ENCODE measurements at regions of chr1 and their contacts with region 1.

Region 1: DNA sequence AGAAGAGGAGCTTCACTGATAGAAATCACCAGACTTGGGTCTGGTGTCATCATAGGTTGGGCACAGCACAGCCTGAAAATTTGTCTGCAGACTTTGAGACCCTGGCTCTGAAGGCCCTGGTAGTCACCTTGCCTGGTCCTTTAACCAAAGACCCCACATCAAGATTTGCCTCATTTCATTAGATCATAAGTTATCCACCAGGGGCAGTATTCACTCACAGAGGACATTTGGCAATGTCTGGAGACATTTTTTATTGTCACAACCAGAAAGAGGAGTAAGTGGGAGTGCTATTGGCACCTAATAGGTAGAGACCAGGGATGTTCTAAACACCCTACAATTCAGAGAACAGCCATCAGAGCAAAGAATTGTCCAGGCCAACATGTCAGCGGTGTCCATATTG is 22.1 kb upstream of the PAX7 start:
- DNase-seq: no peak
- H3K4me3 ChIP-seq: no peak overlapping the region
- H3K27ac ChIP-seq: no peak overlapping the region
- H3K4me1 ChIP-seq: no peaks in the 10 kb centered on the region
- H3K27me3 ChIP-seq: no peaks in the 10 kb centered on the region
- CTCF ChIP-seq: no peak
- POLR2A ChIP-seq: no peak

Region 2: GRCh38 chr1:18820791-18821641 is 212.5 kb after region 1 on chr1:
- intact Hi-C with region 1: loop called (anchors 10 kb)
- DNase-seq: no peak
- H3K4me3 ChIP-seq: no peak overlapping the region
- H3K27ac ChIP-seq: no peak overlapping the region
- H3K4me1 ChIP-seq: no peaks in the 10 kb centered on the region
- H3K27me3 ChIP-seq: no peaks in the 10 kb centered on the region
- CTCF ChIP-seq: peak in 2 of 3 experiments; percentile 54 to 62
- POLR2A ChIP-seq: no peak